ENCODE measurements at regions of chr4 and their contacts with region 1.

Region 1: DNA sequence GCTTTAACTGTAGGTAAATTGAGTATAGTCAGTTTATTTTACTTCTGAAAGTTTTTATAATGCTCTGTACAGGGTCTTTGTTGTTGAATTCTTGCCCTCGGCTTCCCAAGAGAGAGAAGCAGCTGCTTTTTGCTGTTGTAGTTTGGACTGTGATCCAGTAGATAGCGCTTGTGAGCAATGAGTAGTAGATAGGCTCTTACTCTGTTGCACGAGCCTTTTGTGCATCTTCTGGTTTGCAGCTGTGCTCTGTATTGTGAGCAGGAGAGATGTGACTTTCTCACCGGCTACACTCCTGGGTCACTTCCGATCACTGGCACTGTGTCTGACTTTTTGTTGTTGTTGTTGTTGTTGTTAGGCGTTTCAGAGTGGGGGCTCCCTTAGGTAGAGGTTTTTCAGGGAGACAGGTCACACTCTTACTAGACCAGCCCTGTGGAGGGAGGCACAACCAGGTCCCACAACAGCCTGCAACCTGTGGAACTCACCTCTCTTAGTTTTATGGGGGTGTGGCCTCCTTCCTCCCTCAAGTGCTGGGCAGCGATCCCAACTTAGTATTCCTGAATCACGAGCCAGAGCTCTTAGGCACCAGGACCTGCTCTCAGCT is 822.1 kb upstream of the GALNTL6 start:
- DNase-seq: peak; percentile 37
- ATAC-seq: peak; percentile 96
- H3K4me3 ChIP-seq: no peak overlapping the region
- H3K27ac ChIP-seq: no peak overlapping the region
- H3K4me1 ChIP-seq: no peaks in the 10 kb centered on the region
- H3K27me3 ChIP-seq: no peaks in the 10 kb centered on the region
- CTCF ChIP-seq: peak; percentile 39 to 76 (median 75); a peak in 5 of 6 replicates
- POLR2A ChIP-seq: no peak
- RAD21 ChIP-seq: peak; percentile 67

Region 2: DNA sequence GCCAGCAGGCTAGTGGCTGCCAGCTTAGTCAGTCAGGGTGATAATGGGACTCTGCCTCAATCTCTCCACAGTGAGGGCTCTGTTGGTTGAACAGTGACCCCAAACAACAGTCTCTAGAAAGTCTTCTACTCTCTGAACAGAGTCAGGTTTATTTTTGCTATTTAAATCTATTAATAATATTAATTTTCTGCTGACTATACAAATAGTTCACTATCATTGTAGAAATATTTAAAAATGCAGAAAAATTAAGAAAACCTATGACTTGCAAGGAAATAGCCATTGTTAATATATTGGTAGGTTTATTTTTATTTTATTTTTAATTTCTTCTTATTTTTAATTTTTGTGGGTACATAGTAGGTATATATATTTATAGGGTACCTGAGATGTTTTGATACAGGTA is 833.4 kb before region 1 on chr4:
- CTCF ChIA-PET with region 1: no interaction called
- POLR2A ChIA-PET with region 1: no interaction called
- RAD21 ChIA-PET with region 1: no interaction called
- intact Hi-C with region 1: no loop called
- DNase-seq: no peak
- ATAC-seq: no peak
- H3K4me3 ChIP-seq: no peak overlapping the region
- H3K27ac ChIP-seq: no peak overlapping the region
- H3K4me1 ChIP-seq: no peaks in the 10 kb centered on the region
- H3K27me3 ChIP-seq: no peaks in the 10 kb centered on the region
- CTCF ChIP-seq: no peak
- POLR2A ChIP-seq: no peak
- RAD21 ChIP-seq: no peak

Region 3: DNA sequence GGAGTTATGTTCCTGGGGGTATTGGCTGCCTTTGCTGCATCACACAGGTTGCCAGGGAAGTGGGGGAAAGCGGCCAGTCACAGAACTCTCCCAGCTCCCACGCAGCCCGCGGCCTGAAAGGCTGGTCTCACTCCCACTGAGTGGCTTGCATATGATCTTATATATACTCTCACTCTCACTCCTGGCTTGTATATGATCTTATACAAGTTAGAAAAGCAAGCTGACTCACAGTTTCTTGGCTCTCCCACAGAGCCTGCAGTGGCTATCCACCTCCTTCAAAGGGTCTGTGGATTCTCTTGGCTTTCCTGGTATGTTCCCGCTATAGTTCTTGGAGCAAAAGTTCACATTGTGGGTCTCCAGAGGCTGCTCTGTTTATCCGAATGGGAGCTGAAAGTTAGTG is 11.4 kb before region 1 on chr4:
- CTCF ChIA-PET with region 1: interaction called, 12 read pairs
- POLR2A ChIA-PET with region 1: no interaction called
- RAD21 ChIA-PET with region 1: no interaction called
- intact Hi-C with region 1: no loop called
- DNase-seq: no peak
- ATAC-seq: no peak
- H3K4me3 ChIP-seq: no peak overlapping the region
- H3K27ac ChIP-seq: no peak overlapping the region
- H3K4me1 ChIP-seq: no peaks in the 10 kb centered on the region
- H3K27me3 ChIP-seq: no peaks in the 10 kb centered on the region
- CTCF ChIP-seq: no peak
- POLR2A ChIP-seq: no peak
- RAD21 ChIP-seq: no peak

Region 4: GRCh38 chr4:171007618-171008390 is 16.7 kb after region 1 on chr4:
- CTCF ChIA-PET with region 1: no interaction called
- POLR2A ChIA-PET with region 1: no interaction called
- RAD21 ChIA-PET with region 1: no interaction called
- intact Hi-C with region 1: no loop called
- DNase-seq: no peak
- ATAC-seq: no peak
- H3K4me3 ChIP-seq: no peak overlapping the region
- H3K27ac ChIP-seq: no peak overlapping the region
- H3K4me1 ChIP-seq: no peaks in the 10 kb centered on the region
- H3K27me3 ChIP-seq: no peaks in the 10 kb centered on the region
- CTCF ChIP-seq: no peak; a peak in 1 of 6 replicates
- POLR2A ChIP-seq: no peak
- RAD21 ChIP-seq: no peak

Region 5: DNA sequence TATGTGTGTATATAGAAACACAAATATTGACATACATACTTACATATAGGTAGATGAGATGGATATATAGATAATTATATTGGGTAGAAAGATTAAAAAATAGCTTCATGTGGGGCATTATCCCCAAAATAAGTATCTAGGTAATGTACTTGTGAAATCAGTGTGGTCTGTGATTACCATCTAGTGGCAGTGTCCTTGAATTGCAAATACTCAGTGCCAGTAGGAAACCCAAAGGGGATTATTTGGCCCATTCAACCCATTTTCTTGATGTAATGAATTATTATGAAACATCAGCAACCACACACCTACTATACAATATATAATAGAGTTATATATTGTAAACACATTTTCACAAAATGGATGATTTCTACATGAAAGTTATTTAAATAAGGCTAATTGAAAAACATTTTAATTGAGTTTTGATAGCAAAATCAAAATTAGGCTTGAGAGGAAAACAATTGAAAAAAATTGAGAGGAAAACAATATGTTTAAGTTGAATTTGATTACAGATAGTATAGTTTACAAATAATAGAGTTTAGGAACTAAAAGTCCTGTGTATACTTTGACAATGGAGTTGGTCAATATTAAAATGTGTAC is 1211.5 kb after region 1 on chr4:
- CTCF ChIA-PET with region 1: no interaction called
- POLR2A ChIA-PET with region 1: no interaction called
- RAD21 ChIA-PET with region 1: no interaction called
- intact Hi-C with region 1: loop called (anchors 2 kb)
- DNase-seq: peak; percentile 32
- ATAC-seq: peak; percentile 67
- H3K4me3 ChIP-seq: no peak overlapping the region
- H3K27ac ChIP-seq: no peak overlapping the region
- H3K4me1 ChIP-seq: no peaks in the 10 kb centered on the region
- H3K27me3 ChIP-seq: no peaks in the 10 kb centered on the region
- CTCF ChIP-seq: peak; percentile 56 to 75 (median 63)
- POLR2A ChIP-seq: no peak
- RAD21 ChIP-seq: peak; percentile 83

Measured in HCT116 (cell line).